MCF 10A (cell line): ENCODE measurements at regions of chr18 and their contacts with region 1.

Region 1: GRCh38 chr18:76982841-76983587 is 149.6 kb downstream of the MBP start:
- DNase-seq: peak; percentile 86
- H3K4me3 Mint-ChIP-seq: peak overlapping the region; percentile 50
- H3K27ac Mint-ChIP-seq: no peak overlapping the region
- H3K4me1 Mint-ChIP-seq: peaks cover 5% of the 10 kb centered on the region
- H3K27me3 Mint-ChIP-seq: peaks cover 4% of the 10 kb centered on the region
- CTCF ChIP-seq: peak; percentile 89

Region 2: GRCh38 chr18:76875390-76876325 is 107.4 kb before region 1 on chr18:
- CTCF ChIA-PET with region 1: interaction called, 4 read pairs
- POLR2A ChIA-PET with region 1: no interaction called
- intact Hi-C with region 1: loop called (anchors 1 kb)
- DNase-seq: peak; percentile 60
- H3K4me3 Mint-ChIP-seq: no peak overlapping the region
- H3K27ac Mint-ChIP-seq: peak overlapping the region; percentile 60
- H3K4me1 Mint-ChIP-seq: no peaks in the 10 kb centered on the region
- H3K27me3 Mint-ChIP-seq: no peaks in the 10 kb centered on the region
- CTCF ChIP-seq: peak; percentile 59

Region 3: DNA sequence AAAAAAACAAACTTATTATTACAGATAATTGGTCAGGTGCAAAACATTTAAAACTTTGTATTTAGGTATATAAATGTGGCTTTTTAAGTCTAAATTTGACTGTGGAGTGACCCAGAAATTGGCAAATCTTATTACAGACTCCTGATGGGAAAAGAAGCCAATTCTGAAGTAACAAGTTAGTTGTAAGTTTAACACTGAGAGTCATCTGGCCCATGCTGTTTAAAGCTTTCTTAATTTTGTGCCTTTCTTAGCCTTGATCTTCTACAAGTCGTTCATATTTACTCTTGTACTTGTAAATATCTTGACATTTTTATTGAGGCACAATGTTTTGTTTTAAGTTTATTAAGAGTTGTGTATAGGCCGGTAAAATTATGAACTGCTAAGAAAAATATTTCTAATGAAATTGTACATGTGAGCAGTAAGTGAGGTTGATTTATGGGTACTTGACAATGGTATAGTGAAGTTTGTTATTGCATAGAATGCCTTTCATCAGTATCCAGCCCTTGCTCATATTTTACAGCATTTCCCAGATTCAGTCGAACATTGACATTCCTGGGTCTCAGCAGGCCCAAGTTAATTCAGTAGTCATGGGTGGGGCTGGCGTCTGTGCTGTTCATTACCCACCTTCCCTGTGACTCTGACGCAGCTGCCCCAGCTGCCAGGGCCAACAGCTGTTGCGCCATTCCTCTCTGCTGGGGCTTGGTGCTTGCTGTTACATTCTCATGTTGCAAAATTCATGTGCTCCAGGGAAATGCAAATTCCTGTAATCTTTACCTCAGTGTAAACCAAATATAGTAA is 39.3 kb before region 1 on chr18:
- CTCF ChIA-PET with region 1: interaction called, 10 read pairs
- POLR2A ChIA-PET with region 1: no interaction called
- intact Hi-C with region 1: no loop called
- DNase-seq: peak; percentile 76
- H3K4me3 Mint-ChIP-seq: no peak overlapping the region
- H3K27ac Mint-ChIP-seq: peak overlapping the region; percentile 79
- H3K4me1 Mint-ChIP-seq: no peaks in the 10 kb centered on the region
- H3K27me3 Mint-ChIP-seq: no peaks in the 10 kb centered on the region
- CTCF ChIP-seq: no peak

Region 4: DNA sequence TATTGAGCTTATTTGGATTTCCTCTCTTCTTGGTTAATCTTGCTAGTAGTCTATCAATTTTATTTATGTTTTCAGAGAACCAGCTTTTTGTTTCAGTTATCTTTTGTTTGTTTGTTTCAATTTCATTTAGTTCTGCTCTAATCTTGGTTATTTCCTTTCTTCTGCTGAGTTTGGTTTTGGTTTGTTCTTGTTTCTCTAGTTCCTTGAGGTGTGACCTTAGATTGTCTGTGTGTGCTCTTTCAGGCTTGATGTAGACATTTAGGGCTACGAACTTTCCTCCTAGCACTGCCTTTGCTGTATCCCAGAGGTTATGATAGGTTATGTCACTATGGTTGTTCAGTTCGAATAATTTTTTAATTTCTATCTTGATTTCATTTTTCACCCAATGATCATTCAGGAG is 19.1 kb before region 1 on chr18:
- CTCF ChIA-PET with region 1: interaction called, 19 read pairs
- POLR2A ChIA-PET with region 1: no interaction called
- intact Hi-C with region 1: no loop called
- DNase-seq: no peak
- H3K4me3 Mint-ChIP-seq: no peak overlapping the region
- H3K27ac Mint-ChIP-seq: no peak overlapping the region
- H3K4me1 Mint-ChIP-seq: no peaks in the 10 kb centered on the region
- H3K27me3 Mint-ChIP-seq: no peaks in the 10 kb centered on the region
- CTCF ChIP-seq: no peak

Region 5: GRCh38 chr18:77000527-77000926 is 17.5 kb after region 1 on chr18:
- CTCF ChIA-PET with region 1: interaction called, 40 read pairs
- POLR2A ChIA-PET with region 1: interaction called, 3 read pairs
- intact Hi-C with region 1: no loop called
- DNase-seq: peak; percentile 52
- H3K4me3 Mint-ChIP-seq: no peak overlapping the region
- H3K27ac Mint-ChIP-seq: no peak overlapping the region
- H3K4me1 Mint-ChIP-seq: no peaks in the 10 kb centered on the region
- H3K27me3 Mint-ChIP-seq: peaks cover 7% of the 10 kb centered on the region
- CTCF ChIP-seq: peak; percentile 89

Region 6: GRCh38 chr18:77207540-77207939 is 224.5 kb after region 1 on chr18:
- CTCF ChIA-PET with region 1: interaction called, 36 read pairs
- POLR2A ChIA-PET with region 1: no interaction called
- intact Hi-C with region 1: loop called (anchors 5 kb)
- DNase-seq: peak; percentile 69
- H3K4me3 Mint-ChIP-seq: no peak overlapping the region
- H3K27ac Mint-ChIP-seq: no peak overlapping the region
- H3K4me1 Mint-ChIP-seq: peaks cover 6% of the 10 kb centered on the region
- H3K27me3 Mint-ChIP-seq: no peaks in the 10 kb centered on the region
- CTCF ChIP-seq: peak; percentile 31